ENCODE measurements at regions of chr7 and their contacts with region 1.

Region 1: DNA sequence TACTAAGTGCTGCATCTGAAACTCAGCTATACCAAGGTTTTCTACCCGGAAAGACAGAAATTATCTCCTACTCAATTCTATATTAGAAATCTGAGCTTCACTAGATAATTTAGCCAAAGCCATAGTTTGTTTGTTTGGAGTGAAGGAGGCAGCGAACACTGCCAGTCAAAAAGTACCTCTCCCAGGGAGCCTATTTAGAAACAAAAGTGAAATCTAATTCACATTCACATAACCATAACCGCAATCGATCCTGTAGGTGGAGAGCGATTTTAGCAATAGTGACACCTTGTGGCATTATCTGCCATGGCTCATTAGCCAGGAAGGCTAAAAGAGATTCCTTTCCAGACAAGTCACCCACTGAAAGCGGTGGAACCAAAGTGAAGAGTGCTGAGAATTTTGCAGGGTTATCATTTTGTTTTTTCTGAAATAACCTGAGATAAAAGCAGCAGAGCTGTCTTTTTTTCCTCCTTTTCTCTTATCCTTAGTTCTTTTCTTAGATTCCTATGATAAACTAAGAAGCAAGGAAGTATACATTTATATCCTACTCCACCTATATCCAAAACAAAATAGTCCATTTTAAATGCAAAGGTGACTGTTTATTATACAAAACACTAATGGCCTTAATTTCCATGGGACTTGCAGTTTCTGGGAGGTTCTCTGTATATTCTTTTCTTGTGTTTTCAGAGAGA is 83.7 kb upstream of the BET1 start:
- DNase-seq: peak; percentile 72
- H3K4me3 Mint-ChIP-seq: peak overlapping the region; percentile 41
- H3K27ac Mint-ChIP-seq: no peak overlapping the region
- H3K4me1 Mint-ChIP-seq: peaks cover 14% of the 10 kb centered on the region
- H3K27me3 Mint-ChIP-seq: peaks cover 15% of the 10 kb centered on the region

Region 2: GRCh38 chr7:93245525-93246432 is 842.0 kb before region 1 on chr7:
- CTCF ChIA-PET with region 1: interaction called, 3 read pairs
- intact Hi-C with region 1: loop called (anchors 1 kb)
- DNase-seq: no peak
- H3K4me3 Mint-ChIP-seq: no peak overlapping the region
- H3K27ac Mint-ChIP-seq: no peak overlapping the region
- H3K4me1 Mint-ChIP-seq: peaks cover 6% of the 10 kb centered on the region
- H3K27me3 Mint-ChIP-seq: no peaks in the 10 kb centered on the region

Region 3: GRCh38 chr7:93622036-93623033 is 465.5 kb before region 1 on chr7:
- CTCF ChIA-PET with region 1: no interaction called
- intact Hi-C with region 1: loop called (anchors 1 kb)
- DNase-seq: no peak
- H3K4me3 Mint-ChIP-seq: no peak overlapping the region
- H3K27ac Mint-ChIP-seq: no peak overlapping the region
- H3K4me1 Mint-ChIP-seq: no peaks in the 10 kb centered on the region
- H3K27me3 Mint-ChIP-seq: no peaks in the 10 kb centered on the region

Region 4: DNA sequence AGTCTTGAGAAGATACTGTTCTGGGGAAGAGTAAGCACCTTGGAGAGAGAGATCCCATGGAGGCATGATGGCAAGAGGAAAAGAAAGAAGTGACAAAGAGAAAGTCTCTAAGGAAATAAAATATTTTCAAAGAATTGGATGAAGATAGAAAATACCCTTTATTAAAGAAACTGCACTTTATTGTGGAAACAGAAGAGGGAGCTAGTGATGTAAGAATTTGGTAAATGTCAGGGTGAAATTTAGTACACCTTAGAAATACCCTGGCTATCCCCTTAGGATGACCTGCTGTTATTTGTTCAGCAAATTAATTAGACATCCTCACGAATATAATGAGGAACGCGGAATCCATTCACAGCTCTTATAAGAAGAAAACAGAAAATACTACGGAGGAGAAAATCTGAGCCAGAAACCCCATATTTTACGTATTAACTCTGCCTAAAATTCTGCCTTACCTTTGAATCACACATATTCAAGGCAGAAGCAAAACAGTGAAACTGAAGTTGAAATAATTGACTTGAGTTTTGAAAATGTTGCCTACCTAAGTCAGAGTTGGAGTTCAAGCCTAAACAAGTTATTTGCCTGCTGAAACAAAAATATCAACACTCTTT is 288.0 kb before region 1 on chr7:
- CTCF ChIA-PET with region 1: no interaction called
- intact Hi-C with region 1: loop called (anchors 5 kb)
- DNase-seq: no peak
- H3K4me3 Mint-ChIP-seq: no peak overlapping the region
- H3K27ac Mint-ChIP-seq: no peak overlapping the region
- H3K4me1 Mint-ChIP-seq: no peaks in the 10 kb centered on the region
- H3K27me3 Mint-ChIP-seq: no peaks in the 10 kb centered on the region

Region 5: DNA sequence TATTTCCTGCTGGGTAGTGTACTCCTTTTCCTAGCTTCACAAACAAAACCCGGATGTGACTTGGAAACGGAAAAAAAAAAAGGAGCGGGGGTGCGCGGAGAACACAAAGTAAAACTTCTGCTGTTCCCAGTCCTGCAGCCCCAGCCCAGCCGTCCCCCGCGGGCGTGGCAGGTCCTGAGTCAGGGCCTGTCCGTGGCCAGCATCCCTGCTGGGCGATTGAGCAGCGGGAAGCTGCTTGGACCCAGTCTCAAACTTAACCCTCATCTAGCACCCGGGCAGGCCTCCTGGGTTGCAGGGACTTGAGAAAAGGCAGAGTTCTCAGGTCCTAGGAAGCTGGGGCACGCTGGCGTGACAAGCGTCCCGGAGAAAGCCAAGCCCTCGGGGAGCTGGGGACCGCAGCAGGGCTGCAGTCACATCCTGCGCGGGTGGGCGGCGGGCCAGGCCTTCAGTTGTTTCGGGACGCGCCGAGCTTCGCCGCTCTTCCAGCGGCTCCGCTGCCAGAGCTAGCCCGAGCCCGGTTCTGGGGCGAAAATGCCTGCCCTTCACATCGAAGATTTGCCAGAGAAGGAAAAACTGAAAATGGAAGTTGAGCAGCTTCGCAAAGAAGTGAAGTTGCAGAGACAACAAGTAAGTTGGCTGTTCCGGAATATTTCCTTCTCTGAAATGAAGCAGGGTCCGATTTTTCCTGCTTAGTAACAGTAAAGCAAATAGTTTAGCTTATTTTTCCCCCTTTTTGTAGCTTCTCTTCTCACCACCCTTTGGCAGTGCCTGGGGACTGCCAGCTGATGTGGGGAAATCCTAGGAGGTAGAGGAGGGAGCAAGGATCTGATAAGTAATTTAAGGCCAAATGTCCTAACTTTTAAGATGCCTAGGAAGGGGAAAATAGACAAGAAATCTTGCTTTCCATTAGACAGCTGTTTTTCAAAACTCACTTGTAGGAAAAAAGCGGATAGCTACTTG is 165.9 kb before region 1 on chr7 and contains the start of gene GNG11:
- CTCF ChIA-PET with region 1: no interaction called
- intact Hi-C with region 1: loop called (anchors 1 kb)
- DNase-seq: peak; percentile 47
- H3K4me3 Mint-ChIP-seq: peak within 1 kb of the TSS; percentile 60
- H3K27ac Mint-ChIP-seq: no peak within 1 kb of the TSS
- H3K4me1 Mint-ChIP-seq: peaks cover 2% of the 10 kb centered on the region
- H3K27me3 Mint-ChIP-seq: peaks cover 40% of the 10 kb centered on the region
- total RNA-seq, gene GNG11: not detected

Region 6: GRCh38 chr7:94022550-94022949 is 65.3 kb before region 1 on chr7:
- CTCF ChIA-PET with region 1: interaction called, 3 read pairs
- intact Hi-C with region 1: loop called (anchors 5 kb)
- DNase-seq: peak; percentile 50
- H3K4me3 Mint-ChIP-seq: no peak overlapping the region
- H3K27ac Mint-ChIP-seq: no peak overlapping the region
- H3K4me1 Mint-ChIP-seq: peaks cover 6% of the 10 kb centered on the region
- H3K27me3 Mint-ChIP-seq: peaks cover 23% of the 10 kb centered on the region

Measured in activated naive CD4-positive, alpha-beta T cell treated with anti-CD3 and anti-CD28 coated beads for 36 hours (primary cell).